ENCODE measurements at regions of chr9 and their contacts with region 1.

Region 1: GRCh38 chr9:4339357-4339756 is 39.5 kb upstream of the GLIS3 start:
- DNase-seq: peak; percentile 89
- ATAC-seq: no peak

Region 2: GRCh38 chr9:3777137-3777536 is 562.2 kb before region 1 on chr9:
- intact Hi-C with region 1: no loop called
- DNase-seq: no peak
- ATAC-seq: no peak

Region 3: GRCh38 chr9:4293293-4293931 is 45.9 kb before region 1 on chr9:
- intact Hi-C with region 1: no loop called
- DNase-seq: no peak
- ATAC-seq: no peak

Region 4: DNA sequence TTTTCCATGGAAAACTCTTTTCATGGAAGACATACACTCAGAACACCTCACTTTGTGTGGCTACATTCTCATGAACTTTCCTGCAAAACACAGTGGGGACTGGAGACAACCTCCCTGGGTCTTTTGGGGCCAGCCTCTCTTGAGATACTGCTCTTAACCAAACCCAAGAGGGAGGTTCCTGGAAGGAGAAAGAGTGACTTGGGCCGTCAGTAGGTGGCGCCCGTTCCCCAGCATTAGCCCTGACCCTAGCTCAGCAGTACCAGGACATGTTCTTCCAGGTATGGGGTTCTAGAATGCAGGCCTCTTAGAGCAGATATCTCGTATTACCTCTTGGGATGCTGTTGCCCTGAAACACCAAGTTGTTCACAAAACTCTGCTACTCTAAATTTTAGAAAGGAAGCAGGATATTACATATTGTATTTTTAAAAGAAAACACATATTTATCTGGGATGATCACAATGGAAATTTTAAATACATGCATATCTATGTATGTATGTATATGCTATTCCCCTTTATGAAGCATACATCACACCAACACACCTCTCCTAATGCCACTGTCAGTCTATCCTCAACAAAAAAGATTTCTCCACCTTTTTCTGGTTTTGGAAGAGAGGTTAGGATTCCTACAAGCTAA is 23.7 kb before region 1 on chr9:
- intact Hi-C with region 1: loop called (anchors 1 kb)
- DNase-seq: peak; percentile 81
- ATAC-seq: peak; percentile 91

Region 5: DNA sequence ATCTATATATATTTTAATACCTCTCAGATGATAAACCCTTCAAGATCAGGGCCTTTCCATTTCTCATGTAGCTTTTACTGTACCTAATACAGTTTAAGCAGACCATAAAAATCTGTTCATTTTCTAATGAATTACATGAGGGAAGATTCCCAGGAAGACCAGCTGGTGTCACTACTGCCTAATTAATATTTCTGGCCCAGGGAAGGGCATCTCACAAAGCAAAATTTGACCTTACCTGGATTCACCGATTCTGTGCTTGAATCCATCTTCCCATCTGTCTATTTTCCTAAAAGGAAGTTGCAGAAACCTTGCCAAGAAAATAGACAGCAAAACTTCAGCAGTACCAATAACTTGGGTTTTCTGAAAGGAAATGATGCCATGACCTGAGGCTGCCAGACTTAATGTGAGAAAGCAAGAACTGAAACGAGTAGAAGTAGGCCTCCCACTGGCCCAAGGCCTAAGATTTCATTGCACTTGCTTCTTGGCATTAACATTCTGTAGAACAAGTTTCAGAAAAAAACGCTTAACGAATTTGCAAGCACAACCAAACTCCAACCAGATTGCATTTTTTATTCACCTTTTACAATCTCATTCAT is 43.5 kb after region 1 on chr9:
- intact Hi-C with region 1: no loop called
- DNase-seq: no peak
- ATAC-seq: no peak

Measured in Right ventricle myocardium inferior (tissue), 1 donor.